ENCODE measurements at regions of chr6 and their contacts with region 1.

Region 1: GRCh38 chr6:3518356-3519225 is 61.7 kb upstream of the SLC22A23 start:
- DNase-seq: peak; percentile 99
- H3K4me3 Mint-ChIP-seq: peak overlapping the region; percentile 6
- H3K27ac Mint-ChIP-seq: peak overlapping the region; percentile 44
- H3K4me1 Mint-ChIP-seq: peaks cover 44% of the 10 kb centered on the region
- H3K27me3 Mint-ChIP-seq: no peaks in the 10 kb centered on the region
- CTCF ChIP-seq: no peak

Region 2: DNA sequence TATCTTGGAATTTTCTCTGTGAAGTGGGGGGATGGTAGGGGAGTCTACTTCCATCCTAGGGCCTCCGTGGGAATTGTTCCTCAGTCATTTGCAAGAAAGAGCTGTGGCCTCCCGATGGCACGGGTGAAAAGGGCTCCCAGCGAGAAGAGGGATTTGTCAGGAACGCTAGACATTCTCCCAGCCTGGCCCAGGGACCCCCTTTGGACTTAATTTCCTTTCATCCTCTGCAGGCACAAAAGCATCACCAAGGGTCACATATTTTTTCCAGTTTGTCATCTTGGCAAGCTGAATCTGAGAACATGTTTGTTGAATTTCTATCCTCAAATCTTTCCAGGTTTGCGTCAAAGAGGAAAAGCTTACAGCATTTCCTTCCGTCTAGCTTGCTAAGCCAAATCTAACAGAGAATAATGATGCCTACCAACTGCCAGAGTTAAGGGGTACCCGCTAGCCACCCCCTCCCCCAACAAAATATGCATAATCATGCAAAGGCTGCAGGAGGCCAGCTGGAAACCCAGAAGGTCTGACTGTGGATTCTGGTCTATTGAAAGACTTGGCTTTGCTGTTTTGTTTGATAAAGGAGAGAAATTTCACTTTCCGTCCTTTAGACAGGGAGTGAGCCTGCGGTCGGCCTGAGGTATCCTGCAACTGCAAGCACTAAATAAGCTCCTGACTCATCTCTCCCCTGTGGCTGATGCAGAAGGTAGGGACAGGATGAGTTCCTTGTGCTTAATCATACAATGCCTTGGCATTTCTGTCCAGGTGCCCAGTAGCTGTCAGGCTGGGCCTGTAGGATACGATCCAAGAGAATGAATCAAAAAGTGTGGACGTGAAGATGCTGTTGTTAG is 236.7 kb before region 1 on chr6:
- CTCF ChIA-PET with region 1: interaction called, 4 read pairs
- POLR2A ChIA-PET with region 1: interaction called, 11 read pairs
- intact Hi-C with region 1: loop called (anchors 5 kb)
- DNase-seq: peak; percentile 94
- H3K4me3 Mint-ChIP-seq: no peak overlapping the region
- H3K27ac Mint-ChIP-seq: no peak overlapping the region
- H3K4me1 Mint-ChIP-seq: peaks cover 11% of the 10 kb centered on the region
- H3K27me3 Mint-ChIP-seq: no peaks in the 10 kb centered on the region
- CTCF ChIP-seq: no peak

Region 3: GRCh38 chr6:3410385-3411360 is 107.9 kb before region 1 on chr6:
- CTCF ChIA-PET with region 1: interaction called, 3 read pairs
- POLR2A ChIA-PET with region 1: interaction called, 22 read pairs
- intact Hi-C with region 1: loop called (anchors 5 kb)
- DNase-seq: peak; percentile 71
- H3K4me3 Mint-ChIP-seq: no peak overlapping the region
- H3K27ac Mint-ChIP-seq: no peak overlapping the region
- H3K4me1 Mint-ChIP-seq: peaks cover 13% of the 10 kb centered on the region
- H3K27me3 Mint-ChIP-seq: no peaks in the 10 kb centered on the region
- CTCF ChIP-seq: peak; percentile 64

Region 4: GRCh38 chr6:3466488-3467219 is 51.9 kb before region 1 on chr6:
- CTCF ChIA-PET with region 1: no interaction called
- POLR2A ChIA-PET with region 1: interaction called, 23 read pairs
- intact Hi-C with region 1: no loop called
- DNase-seq: no peak
- H3K4me3 Mint-ChIP-seq: no peak overlapping the region
- H3K27ac Mint-ChIP-seq: no peak overlapping the region
- H3K4me1 Mint-ChIP-seq: peaks cover 5% of the 10 kb centered on the region
- H3K27me3 Mint-ChIP-seq: no peaks in the 10 kb centered on the region
- CTCF ChIP-seq: no peak

Region 5: DNA sequence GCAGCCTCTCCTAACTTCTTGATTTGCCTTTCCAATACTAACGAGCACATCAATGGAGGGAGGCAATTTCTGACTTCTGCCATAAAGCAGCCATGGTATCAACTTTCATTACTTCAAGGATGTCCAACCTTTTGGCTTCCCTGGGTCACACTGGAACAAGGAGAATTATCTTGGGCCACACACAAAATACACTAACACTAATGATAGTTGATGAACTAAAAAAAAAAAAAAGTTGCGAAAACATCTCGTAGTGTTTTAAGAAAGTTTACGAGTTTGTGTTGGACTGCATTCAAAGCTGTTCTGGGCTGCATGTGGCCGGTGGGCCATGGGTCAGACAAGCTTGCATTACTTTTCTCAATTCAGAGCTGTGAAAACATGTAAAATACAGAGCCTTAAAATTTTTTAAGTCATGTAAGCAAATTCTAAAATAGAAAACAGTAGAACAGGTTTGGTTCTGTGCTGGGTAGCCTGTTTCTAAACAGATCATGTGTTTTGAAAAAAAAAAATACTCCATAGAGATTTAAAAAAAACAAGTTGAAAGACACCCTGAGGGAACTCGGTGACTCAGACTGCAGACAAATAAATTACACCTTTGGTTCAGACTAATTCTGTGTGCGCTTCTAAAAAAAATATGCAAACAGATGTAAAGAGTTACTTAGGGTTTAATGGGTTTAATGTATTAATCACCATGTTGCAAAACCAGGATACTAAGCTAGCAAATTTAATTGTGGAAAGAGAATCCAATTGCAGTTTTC is 18.2 kb before region 1 on chr6:
- CTCF ChIA-PET with region 1: no interaction called
- POLR2A ChIA-PET with region 1: interaction called, 127 read pairs
- intact Hi-C with region 1: no loop called
- DNase-seq: peak; percentile 89
- H3K4me3 Mint-ChIP-seq: peak overlapping the region; percentile 39
- H3K27ac Mint-ChIP-seq: peak overlapping the region; percentile 74
- H3K4me1 Mint-ChIP-seq: peaks cover 15% of the 10 kb centered on the region
- H3K27me3 Mint-ChIP-seq: peaks cover 17% of the 10 kb centered on the region
- CTCF ChIP-seq: no peak

Region 6: GRCh38 chr6:3592371-3592941 is 73.9 kb after region 1 on chr6:
- CTCF ChIA-PET with region 1: interaction called, 6 read pairs
- POLR2A ChIA-PET with region 1: interaction called, 54 read pairs
- intact Hi-C with region 1: loop called (anchors 2 kb)
- DNase-seq: peak; percentile 99
- H3K4me3 Mint-ChIP-seq: no peak overlapping the region
- H3K27ac Mint-ChIP-seq: peak overlapping the region; percentile 69
- H3K4me1 Mint-ChIP-seq: peaks cover 17% of the 10 kb centered on the region
- H3K27me3 Mint-ChIP-seq: no peaks in the 10 kb centered on the region
- CTCF ChIP-seq: no peak

Region 7: GRCh38 chr6:3732345-3733141 is 214.0 kb after region 1 on chr6:
- CTCF ChIA-PET with region 1: interaction called, 5 read pairs
- POLR2A ChIA-PET with region 1: interaction called, 13 read pairs
- intact Hi-C with region 1: loop called (anchors 10 kb)
- DNase-seq: peak; percentile 80
- H3K4me3 Mint-ChIP-seq: no peak overlapping the region
- H3K27ac Mint-ChIP-seq: no peak overlapping the region
- H3K4me1 Mint-ChIP-seq: peaks cover 9% of the 10 kb centered on the region
- H3K27me3 Mint-ChIP-seq: no peaks in the 10 kb centered on the region
- CTCF ChIP-seq: peak; percentile 94